ENCODE measurements at regions of chr9 and their contacts with region 1.

Region 1: DNA sequence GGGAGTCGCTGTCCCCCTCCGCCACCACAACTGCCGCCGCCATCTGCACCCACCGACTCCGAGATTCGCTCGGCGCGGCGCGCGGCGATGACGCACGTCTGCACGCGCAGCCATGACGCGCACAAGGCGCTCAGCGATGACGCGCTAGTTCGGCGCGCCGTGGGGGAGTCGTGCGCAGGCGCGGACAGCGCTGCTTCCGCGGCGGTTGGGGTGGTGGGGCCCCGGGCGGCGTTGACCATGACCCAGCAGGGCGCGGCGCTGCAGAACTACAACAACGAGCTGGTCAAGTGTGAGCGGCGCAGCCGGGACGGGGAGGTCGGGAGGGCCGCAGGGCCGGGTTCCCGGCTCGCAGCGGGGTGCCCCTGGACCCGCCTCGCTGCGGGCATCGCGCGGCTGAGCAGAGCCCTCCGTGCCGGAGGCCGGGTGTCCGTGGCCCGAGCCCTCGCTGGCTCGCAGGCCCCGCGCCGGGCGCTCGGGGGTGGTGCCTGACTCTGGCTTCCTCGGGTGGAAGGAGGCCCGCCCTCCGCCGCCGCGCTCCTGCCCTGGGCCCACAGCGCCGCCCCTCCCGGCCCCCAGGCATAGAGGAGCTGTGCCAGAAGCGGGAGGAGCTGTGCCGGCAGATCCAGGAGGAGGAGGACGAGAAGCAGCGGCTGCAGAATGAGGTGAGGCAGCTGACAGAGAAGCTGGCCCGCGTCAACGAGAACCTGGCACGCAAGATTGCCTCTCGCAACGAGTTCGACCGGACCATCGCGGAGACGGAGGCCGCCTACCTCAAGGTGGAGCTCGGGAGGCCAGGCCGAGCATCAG is at the starts of genes ANAPC2 and SSNA1:
- DNase-seq: peak; percentile 97
- ATAC-seq: peak; percentile 90
- total RNA-seq, gene ANAPC2: 35.0 TPM
- total RNA-seq, gene SSNA1: 70.7 TPM

Region 2: DNA sequence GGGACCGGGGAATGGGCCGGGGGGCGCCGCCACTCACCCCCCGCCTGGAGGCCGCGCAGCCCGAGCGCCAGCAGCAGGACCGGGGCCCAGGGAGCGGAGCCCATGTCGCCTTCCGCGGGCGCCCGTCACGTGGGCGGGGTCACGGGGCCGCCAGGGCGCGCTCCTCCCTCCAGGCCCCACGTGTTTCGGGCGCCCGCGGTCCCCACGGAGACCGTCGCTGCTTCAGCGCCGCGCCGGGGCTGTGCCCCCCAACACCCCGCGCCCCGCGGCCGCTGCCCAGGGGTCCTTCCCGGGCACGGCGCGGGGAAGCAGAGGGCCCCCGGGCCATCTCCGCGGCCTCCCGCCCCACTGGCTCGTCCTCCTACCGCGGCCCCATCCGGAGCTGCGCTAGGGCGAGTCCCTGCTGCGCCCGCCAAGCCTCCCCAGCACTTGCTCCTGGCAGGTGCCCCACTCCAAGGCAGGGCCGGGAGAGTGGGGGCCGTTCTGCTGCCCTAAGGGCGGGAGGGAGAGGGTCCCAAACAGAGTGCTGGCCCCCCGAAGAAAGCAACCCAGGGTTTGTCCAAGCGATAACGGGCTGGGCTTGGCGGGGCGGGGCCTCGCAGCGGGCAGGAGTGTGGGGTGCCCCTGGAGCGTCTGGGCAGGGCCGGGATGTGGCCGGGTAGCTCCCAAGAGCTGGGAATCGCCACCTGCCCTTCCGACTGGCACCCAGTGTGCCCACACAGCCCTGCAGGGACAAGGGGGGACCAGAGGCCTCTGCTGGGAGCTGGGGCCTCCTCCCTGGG is 73.9 kb before region 1 on chr9 and contains the start of gene DPP7:
- intact Hi-C with region 1: loop called (anchors 2 kb)
- DNase-seq: peak; percentile 92
- ATAC-seq: peak; percentile 86
- total RNA-seq, gene DPP7: 143 TPM

Region 3: DNA sequence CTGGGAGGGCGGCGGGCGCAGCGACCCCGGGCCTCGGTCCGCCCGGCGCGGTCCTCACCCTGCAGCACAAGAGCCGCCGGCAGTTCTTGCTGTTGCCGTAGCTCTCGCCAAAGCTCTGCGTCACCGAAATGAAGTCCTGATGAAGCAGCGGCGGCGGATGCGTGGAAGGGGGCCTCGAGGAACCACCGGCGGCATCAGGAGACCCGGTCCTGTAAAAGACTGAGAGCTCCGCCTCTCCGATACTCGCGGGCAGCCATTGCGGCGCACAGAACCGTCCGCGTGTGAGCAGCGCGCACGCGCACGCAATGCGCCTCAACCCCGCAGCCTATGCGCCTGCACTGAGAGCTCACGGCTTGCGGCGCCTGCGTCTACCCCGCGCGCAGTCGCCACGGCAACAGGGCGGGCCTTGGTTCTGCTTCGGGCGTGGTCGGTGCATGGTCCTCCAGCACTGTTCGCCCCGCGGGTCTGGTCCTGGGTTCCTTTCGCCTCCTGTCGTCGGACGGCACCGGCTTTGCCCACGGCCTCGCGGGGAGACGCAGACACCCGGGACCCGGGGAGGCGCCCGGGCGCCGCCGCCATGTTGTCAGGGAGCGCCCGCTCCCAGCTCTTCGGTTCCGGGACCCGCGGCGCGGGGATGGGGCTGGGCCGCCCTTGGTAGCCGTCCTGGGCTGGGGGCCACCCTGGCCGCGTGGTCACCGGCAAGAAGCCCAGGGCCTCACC is 59.1 kb before region 1 on chr9:
- intact Hi-C with region 1: loop called (anchors 5 kb)
- DNase-seq: peak; percentile 96
- ATAC-seq: peak; percentile 99

Region 4: GRCh38 chr9:137205126-137206069 is 16.7 kb after region 1 on chr9 and contains the starts of genes NDOR1 and TMEM203:
- intact Hi-C with region 1: loop called (anchors 2 kb)
- DNase-seq: peak; percentile 97
- ATAC-seq: peak; percentile 56
- total RNA-seq, gene NDOR1: 5.9 TPM
- total RNA-seq, gene TMEM203: 44.6 TPM

Region 5: GRCh38 chr9:137223078-137223970 is 34.6 kb after region 1 on chr9:
- intact Hi-C with region 1: loop called (anchors 2 kb)
- DNase-seq: peak; percentile 98
- ATAC-seq: peak; percentile 93

Region 6: GRCh38 chr9:137240861-137241489 is 52.3 kb after region 1 on chr9 and contains the start of gene TUBB4B:
- intact Hi-C with region 1: loop called (anchors 5 kb)
- DNase-seq: peak; percentile 99
- ATAC-seq: peak; percentile 91
- total RNA-seq, gene TUBB4B: 620 TPM

Region 7: GRCh38 chr9:137302176-137302994 is 113.7 kb after region 1 on chr9 and contains the start of gene NRARP:
- intact Hi-C with region 1: no loop called
- DNase-seq: peak; percentile 96
- ATAC-seq: peak; percentile 82
- total RNA-seq, gene NRARP: 4.7 TPM

Measured in Right ventricle myocardium inferior (tissue), 1 donor.